ENCODE measurements at regions of chr13 and their contacts with region 1.

Region 1: DNA sequence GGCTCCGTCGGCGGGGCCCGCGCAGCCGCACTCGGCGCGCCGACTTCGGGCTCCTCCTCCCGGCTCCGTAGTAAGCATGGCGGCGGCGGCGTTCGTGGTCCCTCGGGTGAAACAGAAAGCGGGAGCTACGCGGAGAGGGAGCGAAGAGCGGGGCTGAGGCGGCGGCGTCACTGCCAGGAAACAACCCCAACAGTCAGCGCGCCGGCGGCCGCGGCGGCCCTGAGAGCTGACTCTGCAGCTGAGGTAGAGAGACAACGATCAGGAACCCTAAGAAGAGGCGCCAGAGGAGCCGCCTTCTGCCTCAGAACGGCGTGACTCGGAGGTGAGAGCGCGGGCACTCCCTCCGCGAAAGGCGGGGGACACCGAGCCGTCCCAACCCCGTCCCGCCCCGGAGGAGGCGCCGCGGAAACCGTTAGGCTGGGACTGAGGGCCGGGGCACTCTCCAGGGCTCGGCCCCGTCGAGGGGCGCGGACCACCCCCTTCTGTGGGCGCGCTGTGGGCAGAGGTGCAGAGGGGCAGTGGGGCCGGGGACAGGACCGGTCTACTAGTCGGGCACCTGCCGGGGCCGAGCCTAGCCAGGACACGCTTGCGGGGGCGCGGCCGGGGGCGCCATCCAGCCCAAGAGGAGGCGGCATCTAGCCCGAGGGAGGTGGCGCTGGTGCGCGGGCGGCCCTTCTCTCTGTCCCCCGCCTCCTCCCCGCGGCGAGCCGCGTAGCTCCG is at the start of gene FNDC3A:
- DNase-seq: peak; percentile 67
- ATAC-seq: peak; percentile 91
- H3K4me3 ChIP-seq: peak within 1 kb of the TSS; percentile 88 to 92 (median 88)
- H3K27ac ChIP-seq: peak within 1 kb of the TSS; percentile 98
- H3K4me1 ChIP-seq: peaks cover 38% of the 10 kb centered on the region
- H3K27me3 ChIP-seq: peaks cover 0 to 7% of the 10 kb centered on the region in 2 experiments; a peak in 2 of 5 replicates
- CTCF ChIP-seq: peak; percentile 56
- EP300 ChIP-seq: no peak
- POLR2A ChIP-seq: peak; percentile 63 to 75
- RAD21 ChIP-seq: no peak
- total RNA-seq, gene FNDC3A: 39.3 and 61.0 TPM in 2 replicates

Region 2: DNA sequence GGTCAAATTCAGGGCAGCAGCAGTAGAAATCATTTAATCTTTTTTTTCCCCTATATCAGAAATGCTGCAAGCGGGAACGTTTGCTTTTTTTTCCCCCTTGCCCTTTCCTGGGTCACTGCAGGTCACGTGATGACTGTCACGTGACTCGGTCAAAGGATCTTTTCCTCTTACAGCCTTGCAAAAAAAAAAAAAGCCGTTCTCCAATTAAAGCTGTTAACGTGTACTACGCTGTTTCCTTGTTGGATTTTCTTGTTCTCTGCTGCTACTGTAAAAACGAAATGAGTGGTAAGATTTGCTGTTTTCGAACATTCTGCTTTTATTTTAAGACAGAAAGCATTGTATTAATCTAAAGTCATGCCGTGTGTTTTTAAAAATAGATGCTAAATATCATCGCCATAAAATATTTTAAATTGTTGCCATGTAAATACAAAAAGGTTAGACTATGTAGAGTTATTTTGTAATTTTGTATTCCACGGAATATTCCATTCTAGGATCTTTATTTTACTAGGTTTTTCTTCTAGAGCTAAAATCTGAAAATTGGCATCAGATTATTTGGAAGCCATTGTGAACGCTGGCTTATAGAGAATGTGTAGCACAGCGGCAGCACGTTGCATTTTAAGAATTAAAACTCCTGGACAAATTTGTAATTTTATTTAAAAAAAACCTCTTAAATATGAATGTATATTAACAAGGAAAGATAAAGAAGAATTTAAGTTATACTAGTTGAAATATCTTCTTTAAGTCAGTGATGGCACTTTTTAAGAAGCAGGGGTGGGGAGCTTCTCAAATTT is 134.3 kb after region 1 on chr13:
- CTCF ChIA-PET with region 1: no interaction called
- POLR2A ChIA-PET with region 1: no interaction called
- in situ Hi-C with region 1: no loop called
- intact Hi-C with region 1: loop called (anchors 10 kb)
- DNase-seq: peak; percentile 92
- ATAC-seq: peak; percentile 75
- H3K4me3 ChIP-seq: peak overlapping the region; percentile 62 to 99 (median 75)
- H3K27ac ChIP-seq: peak overlapping the region; percentile 86
- H3K4me1 ChIP-seq: peaks cover 38% of the 10 kb centered on the region
- H3K27me3 ChIP-seq: no peaks in the 10 kb centered on the region; a peak in 1 of 5 replicates
- CTCF ChIP-seq: no peak
- EP300 ChIP-seq: peak in 1 of 2 experiments; percentile 21; a peak in 1 of 4 replicates
- POLR2A ChIP-seq: peak; percentile 38 to 68; a peak in 3 of 4 replicates
- RAD21 ChIP-seq: no peak